Mammary epithelial cell (primary cell): ENCODE measurements at regions of chr10 and their contacts with region 1.

Region 1: GRCh38 chr10:99711129-99711719 is 20.7 kb downstream of the COX15 start:
- DNase-seq: peak; percentile 34
- H3K4me3 ChIP-seq: no peak overlapping the region
- H3K27ac ChIP-seq: no peak overlapping the region
- H3K4me1 ChIP-seq: no peaks in the 10 kb centered on the region
- H3K27me3 ChIP-seq: no peaks in the 10 kb centered on the region
- CTCF ChIP-seq: peak; percentile 43 to 59

Region 2: GRCh38 chr10:99430451-99431189 is 280.6 kb before region 1 on chr10 and contains the start of gene GOT1:
- CTCF ChIA-PET with region 1: no interaction called
- dilution Hi-C with region 1: no loop called
- in situ Hi-C with region 1: loop called in 1 of 2 experiments (anchors 25 kb)
- intact Hi-C with region 1: loop called (anchors 5 kb)
- DNase-seq: peak; percentile 100
- H3K4me3 ChIP-seq: peak within 1 kb of the TSS; percentile 82 to 97 (median 90)
- H3K27ac ChIP-seq: peak within 1 kb of the TSS; percentile 84
- H3K4me1 ChIP-seq: peaks cover 10% of the 10 kb centered on the region
- H3K27me3 ChIP-seq: no peaks in the 10 kb centered on the region
- CTCF ChIP-seq: no peak
- total RNA-seq, gene GOT1: 70.0 to 75.5 TPM

Region 3: DNA sequence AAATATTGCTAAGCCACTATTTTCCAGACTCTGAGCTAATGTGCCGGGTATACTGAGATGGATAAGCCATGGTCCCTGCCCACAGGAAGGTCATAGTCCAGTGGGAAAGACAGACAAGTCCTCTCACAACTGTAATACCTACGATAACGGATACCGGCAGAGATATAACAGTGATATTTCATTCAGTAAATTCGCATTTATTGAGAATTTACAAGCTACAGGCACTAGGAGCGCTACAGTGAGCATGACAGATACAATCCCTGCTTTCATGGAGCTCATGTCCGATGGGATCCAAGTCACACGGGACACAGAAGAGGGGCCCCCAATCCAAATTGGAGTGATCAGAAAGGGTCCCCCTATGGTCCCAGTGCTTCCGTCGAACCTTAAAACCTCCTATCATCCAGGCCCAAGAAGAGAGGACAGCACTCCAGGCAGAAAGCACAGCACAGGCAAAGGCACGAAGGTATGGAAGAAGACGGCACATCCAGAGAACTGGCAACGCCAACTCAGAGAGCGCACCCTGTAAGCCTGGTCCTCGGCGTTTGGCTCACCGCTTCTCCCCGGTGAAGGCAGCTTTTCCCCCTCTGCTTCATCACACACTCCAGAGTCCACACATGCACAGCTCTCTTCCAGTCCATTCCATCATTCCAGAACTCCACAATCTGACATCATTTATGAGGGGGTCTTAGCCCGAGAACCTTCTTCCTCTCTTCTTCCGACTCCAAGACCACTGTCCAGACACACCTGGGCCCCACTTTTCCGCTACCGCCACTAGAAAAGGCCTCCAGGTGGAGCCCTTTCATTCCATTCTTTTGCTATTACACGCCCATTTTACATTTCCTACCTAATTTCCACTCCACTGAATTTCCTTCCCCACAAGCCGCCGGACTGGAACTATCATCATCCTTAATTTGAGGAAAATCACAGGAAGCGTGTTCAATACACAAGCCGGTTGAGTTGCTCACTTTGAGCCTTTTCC is 226.3 kb before region 1 on chr10:
- CTCF ChIA-PET with region 1: no interaction called
- dilution Hi-C with region 1: no loop called
- in situ Hi-C with region 1: no loop called
- intact Hi-C with region 1: loop called (anchors 5 kb)
- DNase-seq: peak; percentile 2
- H3K4me3 ChIP-seq: no peak overlapping the region
- H3K27ac ChIP-seq: no peak overlapping the region
- H3K4me1 ChIP-seq: no peaks in the 10 kb centered on the region
- H3K27me3 ChIP-seq: peaks cover 7% of the 10 kb centered on the region
- CTCF ChIP-seq: peak; percentile 30 to 45

Region 4: GRCh38 chr10:99560277-99561126 is 150.7 kb before region 1 on chr10:
- CTCF ChIA-PET with region 1: no interaction called
- dilution Hi-C with region 1: no loop called
- in situ Hi-C with region 1: no loop called
- intact Hi-C with region 1: loop called (anchors 1 kb)
- DNase-seq: peak; percentile 32
- H3K4me3 ChIP-seq: no peak overlapping the region
- H3K27ac ChIP-seq: no peak overlapping the region
- H3K4me1 ChIP-seq: peaks cover 4% of the 10 kb centered on the region
- H3K27me3 ChIP-seq: no peaks in the 10 kb centered on the region
- CTCF ChIP-seq: peak; percentile 78 to 80

Region 5: DNA sequence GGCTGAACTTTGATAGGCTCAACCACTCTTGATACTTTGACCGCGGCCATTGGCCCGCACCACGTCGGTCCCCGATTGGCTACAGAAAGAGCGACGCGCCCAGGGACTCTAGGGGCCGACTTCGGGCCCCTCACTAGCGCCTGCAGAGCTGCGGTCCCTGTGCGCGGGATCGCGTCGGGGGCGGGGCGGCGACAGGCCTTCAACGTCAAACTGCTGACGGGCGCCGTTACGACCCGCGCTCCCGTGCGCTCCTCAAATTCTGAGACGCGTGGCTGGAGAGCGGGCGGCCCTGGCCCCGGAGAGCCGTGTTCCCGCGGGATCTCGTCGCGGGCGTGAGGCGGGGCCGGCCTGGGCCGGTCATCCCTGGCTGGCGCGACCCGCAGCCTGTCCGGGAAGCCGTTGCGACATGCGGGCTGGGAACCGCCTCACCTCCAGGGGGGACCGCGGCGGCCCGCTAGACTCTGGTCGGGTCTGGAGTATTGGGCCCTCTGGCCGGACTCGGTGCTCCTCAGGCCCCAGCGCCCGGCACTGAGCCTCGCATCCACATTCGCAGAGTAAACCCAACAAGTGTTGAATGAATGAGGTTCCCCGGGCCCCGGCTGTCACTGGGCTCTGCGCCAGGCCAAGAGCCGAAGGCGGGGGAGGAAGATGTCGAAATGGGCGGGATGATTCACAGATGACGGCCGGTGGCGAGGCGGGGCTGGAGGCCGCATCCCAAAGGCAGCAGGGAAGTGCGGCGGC is 90.3 kb before region 1 on chr10:
- CTCF ChIA-PET with region 1: no interaction called
- dilution Hi-C with region 1: no loop called
- in situ Hi-C with region 1: no loop called
- intact Hi-C with region 1: loop called (anchors 2 kb)
- DNase-seq: peak; percentile 95
- H3K4me3 ChIP-seq: peak overlapping the region; percentile 59 to 76 (median 66)
- H3K27ac ChIP-seq: peak overlapping the region; percentile 96
- H3K4me1 ChIP-seq: peaks cover 22% of the 10 kb centered on the region
- H3K27me3 ChIP-seq: no peaks in the 10 kb centered on the region
- CTCF ChIP-seq: peak in 1 of 2 donors; percentile 11

Region 6: GRCh38 chr10:99630439-99630838 is 80.8 kb before region 1 on chr10:
- CTCF ChIA-PET with region 1: interaction called, 6 read pairs
- dilution Hi-C with region 1: no loop called
- in situ Hi-C with region 1: no loop called
- intact Hi-C with region 1: loop called (anchors 1 kb)
- DNase-seq: peak; percentile 63
- H3K4me3 ChIP-seq: no peak overlapping the region
- H3K27ac ChIP-seq: no peak overlapping the region
- H3K4me1 ChIP-seq: peaks cover 27% of the 10 kb centered on the region
- H3K27me3 ChIP-seq: no peaks in the 10 kb centered on the region
- CTCF ChIP-seq: peak; percentile 45 to 71

Region 7: DNA sequence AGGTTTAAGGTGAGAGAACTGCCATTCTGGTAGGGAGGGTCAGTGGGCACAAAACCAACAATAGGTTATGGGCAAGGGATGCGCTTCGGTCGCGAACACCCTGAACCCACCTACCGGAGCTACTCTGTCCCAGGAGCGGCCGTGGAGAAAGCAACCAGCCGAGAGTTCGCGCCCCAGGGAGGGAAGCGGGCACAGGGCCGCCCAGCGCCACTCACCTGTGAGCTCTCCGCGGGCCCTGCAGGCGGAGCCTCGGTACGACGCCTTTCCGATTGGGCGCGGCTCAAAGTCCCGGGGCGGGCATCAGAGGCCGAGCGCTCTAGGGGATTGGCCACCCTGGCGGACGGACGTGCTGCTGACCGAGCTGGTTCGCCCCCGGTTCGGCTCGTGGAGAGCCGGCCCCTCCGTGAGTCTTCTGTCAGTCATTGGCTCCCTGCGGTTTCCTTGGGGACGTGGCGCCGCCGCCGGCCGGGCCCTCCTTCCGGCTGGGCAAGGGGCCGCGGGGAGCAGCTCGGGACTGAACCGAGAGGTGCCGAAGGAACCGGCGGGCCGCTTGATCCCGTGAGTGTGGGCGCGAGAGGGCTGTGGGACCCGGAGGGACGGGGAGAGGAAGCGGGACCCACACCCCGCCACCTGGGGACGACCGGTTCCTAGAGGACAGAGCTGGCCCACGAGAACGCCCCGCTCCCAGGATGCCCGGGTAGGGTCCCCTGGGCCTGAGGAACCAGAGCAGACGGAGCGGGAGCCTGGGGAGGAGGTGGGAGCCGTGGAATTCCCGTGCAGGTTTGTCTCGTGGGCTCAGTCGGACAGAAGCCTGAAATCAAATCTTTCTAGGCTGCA is 52.0 kb before region 1 on chr10 and contains the start of gene ENTPD7:
- CTCF ChIA-PET with region 1: no interaction called
- dilution Hi-C with region 1: no loop called
- in situ Hi-C with region 1: no loop called
- intact Hi-C with region 1: loop called (anchors 2 kb)
- DNase-seq: peak; percentile 98
- H3K4me3 ChIP-seq: peak within 1 kb of the TSS; percentile 84 to 97 (median 94)
- H3K27ac ChIP-seq: peak within 1 kb of the TSS; percentile 95
- H3K4me1 ChIP-seq: peaks cover 64% of the 10 kb centered on the region
- H3K27me3 ChIP-seq: no peaks in the 10 kb centered on the region
- CTCF ChIP-seq: peak in 1 of 2 donors; percentile 27
- total RNA-seq, gene ENTPD7: 23.2 to 47.2 TPM

Region 8: GRCh38 chr10:99676426-99676825 is 34.8 kb before region 1 on chr10:
- CTCF ChIA-PET with region 1: no interaction called
- dilution Hi-C with region 1: no loop called
- in situ Hi-C with region 1: no loop called
- intact Hi-C with region 1: no loop called
- DNase-seq: no peak
- H3K4me3 ChIP-seq: no peak overlapping the region
- H3K27ac ChIP-seq: no peak overlapping the region
- H3K4me1 ChIP-seq: peaks cover 22% of the 10 kb centered on the region
- H3K27me3 ChIP-seq: no peaks in the 10 kb centered on the region
- CTCF ChIP-seq: no peak

Region 9: DNA sequence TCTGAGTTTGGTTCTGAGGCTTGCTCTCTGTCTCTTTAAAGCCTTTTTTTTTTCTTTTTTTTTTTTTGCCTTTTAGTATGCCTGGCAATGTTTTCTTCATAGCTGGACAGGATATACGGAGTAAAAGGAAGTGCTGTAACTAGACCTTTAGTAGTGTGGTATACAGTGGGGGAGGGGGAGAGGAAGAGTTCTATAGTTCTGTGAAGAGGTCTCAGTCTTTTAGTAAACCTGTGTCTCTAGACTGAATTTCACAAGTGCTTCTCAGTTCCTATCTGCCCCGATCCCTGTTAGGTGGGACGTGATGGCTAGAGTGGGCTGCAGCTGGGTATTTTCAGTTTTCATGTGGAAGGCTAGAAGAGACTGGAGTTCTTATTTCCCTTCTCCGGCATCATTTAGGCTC is 68.1 kb after region 1 on chr10:
- CTCF ChIA-PET with region 1: no interaction called
- dilution Hi-C with region 1: no loop called
- in situ Hi-C with region 1: no loop called
- intact Hi-C with region 1: no loop called
- DNase-seq: peak; percentile 51
- H3K4me3 ChIP-seq: peak overlapping the region; percentile 21 to 31 (median 31)
- H3K27ac ChIP-seq: peak overlapping the region; percentile 97
- H3K4me1 ChIP-seq: peaks cover 70% of the 10 kb centered on the region
- H3K27me3 ChIP-seq: no peaks in the 10 kb centered on the region
- CTCF ChIP-seq: no peak